Ovary (tissue), 10 donors: ENCODE measurements at regions of chr6 and their contacts with region 1.

Region 1: GRCh38 chr6:28758046-28758817 is 165.6 kb downstream of the TRIM27 start:
- DNase-seq: peak in 4 of 5 donors; percentile 48 to 65 (median 60)
- H3K4me3 ChIP-seq: no peak overlapping the region
- H3K27ac ChIP-seq: peak overlapping the region in 1 of 2 donors; percentile 27
- H3K4me1 ChIP-seq: no peaks in the 10 kb centered on the region
- H3K27me3 ChIP-seq: no peaks in the 10 kb centered on the region
- CTCF ChIP-seq: no peak
- EP300 ChIP-seq: no peak
- POLR2A ChIP-seq: no peak

Region 2: GRCh38 chr6:28443112-28443773 is 315.0 kb before region 1 on chr6 and contains the start of gene ZSCAN23:
- intact Hi-C with region 1: no loop called
- DNase-seq: peak; percentile 68 to 85 (median 79)
- H3K4me3 ChIP-seq: peak within 1 kb of the TSS; percentile 76
- H3K27ac ChIP-seq: peak within 1 kb of the TSS; percentile 20 to 30
- H3K4me1 ChIP-seq: no peaks in the 10 kb centered on the region
- H3K27me3 ChIP-seq: no peaks in the 10 kb centered on the region
- CTCF ChIP-seq: no peak
- EP300 ChIP-seq: no peak
- POLR2A ChIP-seq: no peak
- total RNA-seq, gene ZSCAN23: 3.0 to 6.8 (median 4.7) TPM

Region 3: GRCh38 chr6:28729501-28730402 is 28.5 kb before region 1 on chr6:
- intact Hi-C with region 1: loop called in 1 of 4 experiments (anchors 1 kb)
- DNase-seq: no peak
- H3K4me3 ChIP-seq: peak overlapping the region; percentile 41
- H3K27ac ChIP-seq: no peak overlapping the region
- H3K4me1 ChIP-seq: no peaks in the 10 kb centered on the region
- H3K27me3 ChIP-seq: no peaks in the 10 kb centered on the region
- CTCF ChIP-seq: no peak
- EP300 ChIP-seq: no peak
- POLR2A ChIP-seq: no peak